Astrocyte of the cerebellum (primary cell): ENCODE measurements at regions of chr14 and their contacts with region 1.

Region 1: DNA sequence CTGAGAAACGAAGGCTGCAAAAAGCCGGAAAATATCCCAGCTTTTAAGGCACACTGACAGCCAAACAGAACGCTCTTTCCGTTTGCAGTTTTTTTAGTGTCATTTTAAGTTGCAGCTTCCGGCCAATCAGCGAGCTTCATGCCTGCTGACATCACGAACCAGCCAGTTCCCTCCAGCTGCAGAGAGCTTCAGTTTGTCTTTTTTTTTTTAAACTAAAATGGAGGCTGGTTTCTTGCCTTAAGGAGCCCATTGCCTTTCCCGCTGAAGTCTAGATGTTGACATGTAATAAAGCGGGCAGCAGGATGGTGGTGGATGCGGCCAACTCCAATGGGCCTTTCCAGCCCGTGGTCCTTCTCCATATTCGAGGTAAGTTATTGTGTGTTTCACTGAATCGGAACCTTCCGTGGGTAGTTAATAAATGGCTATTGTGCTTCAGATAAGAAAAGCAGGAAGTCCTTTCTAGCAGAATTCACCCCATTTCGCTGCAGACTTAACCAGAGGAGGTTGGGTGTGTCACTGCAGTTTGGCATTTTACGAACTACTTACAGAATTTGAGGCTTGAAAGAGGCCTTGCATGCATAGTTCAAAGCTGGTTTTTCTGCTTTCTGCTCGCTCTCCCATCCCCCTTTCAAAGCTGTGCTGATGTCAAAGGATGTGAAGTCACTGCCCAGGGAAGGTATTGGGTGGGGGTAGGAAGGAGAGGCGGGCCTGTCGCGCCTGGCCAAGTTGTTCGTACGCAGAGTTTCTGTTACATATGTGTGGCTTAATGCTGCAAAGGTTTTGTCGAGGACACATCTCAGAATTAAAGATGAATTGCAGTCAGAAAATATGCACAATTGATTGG is 48.4 kb downstream of the PPP2R5C start:
- DNase-seq: peak; percentile 90
- H3K4me3 ChIP-seq: peak overlapping the region; percentile 70
- CTCF ChIP-seq: no peak

Region 2: GRCh38 chr14:100899854-100900771 is 909.8 kb before region 1 on chr14:
- in situ Hi-C with region 1: no loop called
- DNase-seq: no peak
- H3K4me3 ChIP-seq: no peak overlapping the region
- CTCF ChIP-seq: no peak

Region 3: GRCh38 chr14:101858791-101859537 is 49.1 kb after region 1 on chr14:
- in situ Hi-C with region 1: loop called (anchors 5 kb)
- DNase-seq: no peak
- H3K4me3 ChIP-seq: no peak overlapping the region
- CTCF ChIP-seq: no peak